ENCODE measurements at regions of chr15 and their contacts with region 1.

Region 1: DNA sequence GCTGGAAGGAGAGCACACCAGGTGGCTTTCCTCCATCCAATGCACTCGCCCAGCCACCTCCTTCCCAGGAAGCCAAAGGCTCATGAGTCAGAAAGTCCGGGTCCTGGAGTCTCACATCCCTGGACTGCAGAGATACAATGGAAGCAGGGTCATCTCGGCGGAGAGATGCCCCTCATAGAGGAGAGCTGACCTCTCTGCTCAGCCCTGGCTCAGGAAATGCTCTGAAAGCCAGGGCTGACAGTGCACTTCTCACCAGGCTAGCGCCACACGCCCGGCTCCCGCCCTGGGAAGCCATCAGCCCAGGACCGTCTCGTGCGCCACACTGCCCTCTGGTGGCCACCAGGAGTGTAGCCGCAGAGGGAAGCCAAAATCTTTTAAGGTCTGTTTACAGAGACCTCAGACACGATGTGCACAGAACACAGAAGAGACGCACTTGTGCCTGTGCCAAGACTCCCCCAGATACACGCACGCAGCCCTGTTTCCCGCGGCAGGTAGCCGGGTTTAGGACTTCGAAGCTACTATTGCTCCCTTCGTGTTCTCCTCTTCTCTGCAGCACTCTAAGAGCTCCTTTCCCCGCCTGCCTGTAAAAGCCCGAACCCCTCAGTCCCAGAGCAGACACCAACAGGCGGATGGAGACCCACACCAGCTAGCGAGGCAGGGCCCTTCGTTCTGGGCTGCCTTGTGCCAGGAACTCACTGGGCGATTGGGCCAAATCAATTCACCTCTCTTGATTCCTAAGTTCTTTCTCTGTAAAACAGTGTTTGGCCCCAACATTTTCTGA is 9.7 kb downstream of the NTRK3 start:
- DNase-seq: peak; percentile 79
- H3K4me3 ChIP-seq: no peak overlapping the region
- H3K27ac ChIP-seq: no peak overlapping the region
- H3K4me1 ChIP-seq: peaks cover 13% of the 10 kb centered on the region
- CTCF ChIP-seq: peak; percentile 90

Region 2: DNA sequence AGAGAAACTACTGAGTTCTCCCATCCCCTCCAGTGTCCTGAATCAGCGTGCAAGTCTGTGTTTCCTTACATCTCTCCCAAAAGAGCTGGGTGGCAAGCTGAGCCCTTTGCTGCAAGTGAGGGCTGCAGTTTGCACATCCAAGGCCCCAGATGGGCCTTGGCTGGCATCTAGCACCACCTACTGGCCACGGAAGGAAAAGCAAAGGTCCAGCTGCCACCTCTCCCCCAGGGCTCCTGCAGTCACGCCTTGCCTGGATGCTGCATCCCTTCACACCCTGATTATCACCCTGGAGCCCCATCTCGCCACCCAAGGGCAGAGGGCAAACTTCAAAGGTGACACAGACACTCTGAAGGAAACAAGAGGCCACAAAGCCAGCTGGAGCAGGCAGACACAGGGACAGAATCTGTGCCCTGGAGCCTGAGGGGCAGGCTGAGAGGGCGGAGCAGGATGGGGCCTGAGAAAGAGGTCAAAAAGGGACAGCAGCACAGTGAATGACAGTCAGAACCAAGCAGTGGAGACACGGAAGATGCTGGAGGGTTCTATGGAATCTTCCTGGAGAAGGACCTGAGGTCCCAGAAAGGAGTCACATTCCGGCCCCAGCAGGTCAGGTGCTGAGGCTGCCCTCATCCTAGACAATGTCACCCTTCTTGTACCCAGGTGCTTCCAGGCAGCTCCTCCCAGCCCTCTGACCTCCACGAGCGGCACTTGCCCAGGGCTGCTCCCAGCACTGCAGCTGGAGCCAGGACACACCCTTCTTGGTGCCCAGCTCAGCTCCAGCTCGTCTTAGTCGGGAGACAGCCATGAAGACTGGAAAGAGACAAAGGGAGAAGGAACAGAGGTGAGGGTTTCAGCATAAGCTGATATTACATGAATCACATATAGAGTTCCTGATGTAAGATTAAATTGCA is 28.0 kb after region 1 on chr15:
- CTCF ChIA-PET with region 1: interaction called, 10 read pairs
- POLR2A ChIA-PET with region 1: no interaction called
- intact Hi-C with region 1: no loop called
- DNase-seq: peak; percentile 68
- H3K4me3 ChIP-seq: no peak overlapping the region
- H3K27ac ChIP-seq: no peak overlapping the region
- H3K4me1 ChIP-seq: no peaks in the 10 kb centered on the region
- CTCF ChIP-seq: peak; percentile 89

Region 3: DNA sequence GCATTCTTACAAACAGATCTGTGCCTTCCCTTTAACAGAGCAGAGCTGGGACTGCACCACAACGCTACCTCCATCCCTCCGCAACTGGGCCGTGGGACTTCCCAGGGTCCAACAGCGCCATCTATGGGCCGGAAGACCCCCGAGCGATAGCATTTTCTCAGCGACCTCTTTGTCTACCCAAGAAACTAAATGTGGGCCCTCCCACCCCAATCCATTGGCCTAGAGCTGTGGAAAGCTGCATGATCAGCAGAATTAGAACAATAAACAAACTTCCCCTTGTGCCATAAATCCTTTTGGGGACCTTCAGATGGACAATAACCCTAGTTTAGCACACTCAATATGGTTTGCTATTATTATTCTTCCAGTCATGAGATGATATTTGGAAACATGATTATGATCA is 84.4 kb after region 1 on chr15:
- CTCF ChIA-PET with region 1: no interaction called
- POLR2A ChIA-PET with region 1: interaction called, 3 read pairs
- intact Hi-C with region 1: loop called (anchors 5 kb)
- DNase-seq: peak; percentile 83
- H3K4me3 ChIP-seq: no peak overlapping the region
- H3K27ac ChIP-seq: no peak overlapping the region
- H3K4me1 ChIP-seq: no peaks in the 10 kb centered on the region
- CTCF ChIP-seq: peak; percentile 96

Region 4: DNA sequence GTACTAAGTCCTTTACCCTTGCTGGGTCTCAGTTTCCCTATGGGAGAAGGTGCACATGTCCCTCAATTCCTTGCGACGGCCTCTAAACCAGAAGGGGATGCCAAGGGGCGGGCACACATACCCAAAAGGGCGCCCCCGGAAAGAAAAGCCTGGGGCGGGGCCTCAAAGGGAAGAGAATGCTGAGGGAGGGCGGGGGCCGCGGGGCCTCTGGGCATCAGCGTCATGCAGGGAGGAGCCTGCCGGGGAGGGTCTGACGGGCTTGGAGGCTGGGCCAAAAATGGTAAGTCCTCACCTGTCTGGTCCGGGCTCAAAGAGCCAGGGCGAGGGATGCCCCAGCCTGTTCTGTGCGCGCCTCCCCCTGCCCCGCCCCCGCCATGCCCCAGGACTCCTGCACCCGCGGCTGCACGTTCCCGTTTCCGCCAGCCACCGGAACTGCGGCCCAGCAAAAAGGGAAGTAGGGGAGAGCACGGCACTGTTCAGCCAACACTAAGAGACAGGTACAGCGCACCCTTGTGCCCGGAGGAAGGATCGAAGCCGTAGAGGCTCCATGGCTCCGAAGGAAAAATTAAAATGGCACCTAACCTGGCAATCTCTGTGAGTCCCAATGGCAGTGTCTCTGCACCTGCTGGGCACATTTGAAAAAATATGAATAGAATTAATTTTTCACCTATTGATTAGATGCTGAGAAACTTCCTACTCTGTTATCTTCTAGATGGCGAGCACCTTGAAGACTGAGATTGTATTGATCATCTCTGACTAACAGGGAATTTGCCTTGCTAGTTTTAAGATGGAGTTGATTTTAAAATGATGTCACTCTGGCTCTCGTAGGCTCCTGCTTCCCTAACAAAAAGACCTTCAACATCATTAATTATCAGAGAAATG is 299.6 kb after region 1 on chr15 and contains the start of gene DET1:
- CTCF ChIA-PET with region 1: no interaction called
- POLR2A ChIA-PET with region 1: no interaction called
- intact Hi-C with region 1: no loop called
- DNase-seq: peak; percentile 97
- H3K4me3 ChIP-seq: peak within 1 kb of the TSS; percentile 85
- H3K27ac ChIP-seq: peak within 1 kb of the TSS; percentile 72
- H3K4me1 ChIP-seq: peaks cover 12% of the 10 kb centered on the region
- CTCF ChIP-seq: peak; percentile 82
- total RNA-seq, gene DET1: 7.1 and 9.8 TPM in 2 replicates

Measured in OCI-LY7 (cell line).